Activated CD4-positive, alpha-beta T cell treated with anti-CD3 and anti-CD28 coated beads for 36 hours (primary cell): ENCODE measurements at regions of chr5 and their contacts with region 1.

Region 1: GRCh38 chr5:1799602-1800471 is at the start of gene MRPL36:
- DNase-seq: peak; percentile 97
- ATAC-seq: peak; percentile 79
- H3K4me3 Mint-ChIP-seq: peak within 1 kb of the TSS; percentile 94
- H3K27ac Mint-ChIP-seq: peak within 1 kb of the TSS; percentile 97
- H3K4me1 Mint-ChIP-seq: peaks cover 54% of the 10 kb centered on the region
- H3K27me3 Mint-ChIP-seq: no peaks in the 10 kb centered on the region
- total RNA-seq, gene MRPL36: 51.4 to 64.9 TPM

Region 2: DNA sequence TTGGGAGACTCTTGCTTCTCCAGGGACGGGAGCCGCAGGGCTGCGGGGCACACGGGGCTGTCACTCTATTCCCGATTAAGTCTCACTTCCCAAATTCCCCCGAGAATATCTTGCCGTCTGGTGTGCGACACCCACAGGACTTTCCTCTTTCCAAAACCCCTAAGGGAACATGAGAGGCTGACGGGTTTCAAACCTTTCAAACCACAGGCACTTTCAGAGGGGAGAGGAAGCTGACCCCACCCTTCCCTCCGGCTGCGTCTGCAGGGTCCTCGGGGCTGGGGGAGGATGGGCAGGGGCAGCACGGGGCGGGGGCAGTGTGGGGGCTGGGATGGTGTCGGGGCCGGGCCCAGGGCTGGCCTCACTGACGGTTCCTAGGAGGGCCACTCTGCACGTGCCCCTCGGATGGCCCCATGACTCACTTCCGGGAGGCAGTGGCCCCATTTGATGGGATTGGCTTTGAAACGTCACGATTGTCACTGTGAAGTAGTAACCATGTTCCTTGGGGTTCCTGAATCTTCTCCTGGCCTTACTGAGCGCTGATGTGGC is 1313.8 kb before region 1 on chr5:
- CTCF ChIA-PET with region 1: no interaction called
- POLR2A ChIA-PET with region 1: no interaction called
- intact Hi-C with region 1: no loop called
- DNase-seq: peak; percentile 43
- ATAC-seq: peak; percentile 59
- H3K4me3 Mint-ChIP-seq: no peak overlapping the region
- H3K27ac Mint-ChIP-seq: no peak overlapping the region
- H3K4me1 Mint-ChIP-seq: peaks cover 6% of the 10 kb centered on the region
- H3K27me3 Mint-ChIP-seq: peaks cover 4% of the 10 kb centered on the region

Region 3: DNA sequence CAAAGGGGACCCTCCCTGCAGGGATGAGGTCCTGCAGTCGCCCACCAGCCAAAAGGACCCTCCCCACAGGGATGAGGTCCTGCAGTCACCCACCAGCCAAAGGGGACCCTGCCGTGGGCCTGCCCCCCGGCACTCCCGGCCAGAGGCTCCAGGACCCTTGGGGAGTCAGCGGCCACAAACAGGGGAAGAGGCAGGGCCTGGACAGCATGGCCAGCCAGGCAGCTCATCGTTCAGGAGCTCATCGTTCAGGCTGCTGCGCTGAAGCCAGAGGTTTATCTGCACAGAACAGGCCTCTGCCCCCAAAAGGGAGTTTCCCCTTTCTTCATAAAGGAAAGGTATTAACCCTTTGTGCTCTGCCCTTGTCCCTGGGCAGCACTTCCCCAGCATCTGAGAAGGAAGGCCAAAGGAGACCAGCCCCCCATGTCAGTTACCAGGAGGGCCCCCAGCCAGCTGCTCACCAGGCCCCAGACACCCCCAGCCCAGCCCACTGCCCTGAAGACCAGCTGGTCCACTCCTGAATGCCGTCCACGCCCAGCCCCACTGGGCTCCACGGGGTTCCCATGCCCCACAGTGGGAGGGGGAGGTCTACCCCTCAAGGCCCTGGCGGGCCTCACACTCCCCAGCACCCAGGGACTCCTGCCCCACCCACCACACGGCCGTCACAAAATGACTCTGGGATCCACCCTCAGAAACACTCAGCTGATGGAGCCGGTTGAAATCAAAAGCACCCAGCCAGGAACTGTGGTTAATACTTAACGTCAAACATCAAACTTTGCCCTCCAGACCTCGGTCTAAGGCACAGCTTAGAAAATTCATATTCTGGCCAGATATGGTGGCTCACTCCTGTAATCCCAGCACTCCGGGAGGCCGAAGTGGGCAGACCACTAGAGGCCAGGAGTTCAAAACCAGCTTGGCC is 694.2 kb before region 1 on chr5:
- CTCF ChIA-PET with region 1: no interaction called
- POLR2A ChIA-PET with region 1: no interaction called
- intact Hi-C with region 1: loop called in 1 of 2 experiments (anchors 5 kb)
- DNase-seq: peak; percentile 79
- ATAC-seq: peak; percentile 60
- H3K4me3 Mint-ChIP-seq: peak overlapping the region; percentile 8
- H3K27ac Mint-ChIP-seq: peak overlapping the region; percentile 83
- H3K4me1 Mint-ChIP-seq: peaks cover 76% of the 10 kb centered on the region
- H3K27me3 Mint-ChIP-seq: no peaks in the 10 kb centered on the region

Region 4: DNA sequence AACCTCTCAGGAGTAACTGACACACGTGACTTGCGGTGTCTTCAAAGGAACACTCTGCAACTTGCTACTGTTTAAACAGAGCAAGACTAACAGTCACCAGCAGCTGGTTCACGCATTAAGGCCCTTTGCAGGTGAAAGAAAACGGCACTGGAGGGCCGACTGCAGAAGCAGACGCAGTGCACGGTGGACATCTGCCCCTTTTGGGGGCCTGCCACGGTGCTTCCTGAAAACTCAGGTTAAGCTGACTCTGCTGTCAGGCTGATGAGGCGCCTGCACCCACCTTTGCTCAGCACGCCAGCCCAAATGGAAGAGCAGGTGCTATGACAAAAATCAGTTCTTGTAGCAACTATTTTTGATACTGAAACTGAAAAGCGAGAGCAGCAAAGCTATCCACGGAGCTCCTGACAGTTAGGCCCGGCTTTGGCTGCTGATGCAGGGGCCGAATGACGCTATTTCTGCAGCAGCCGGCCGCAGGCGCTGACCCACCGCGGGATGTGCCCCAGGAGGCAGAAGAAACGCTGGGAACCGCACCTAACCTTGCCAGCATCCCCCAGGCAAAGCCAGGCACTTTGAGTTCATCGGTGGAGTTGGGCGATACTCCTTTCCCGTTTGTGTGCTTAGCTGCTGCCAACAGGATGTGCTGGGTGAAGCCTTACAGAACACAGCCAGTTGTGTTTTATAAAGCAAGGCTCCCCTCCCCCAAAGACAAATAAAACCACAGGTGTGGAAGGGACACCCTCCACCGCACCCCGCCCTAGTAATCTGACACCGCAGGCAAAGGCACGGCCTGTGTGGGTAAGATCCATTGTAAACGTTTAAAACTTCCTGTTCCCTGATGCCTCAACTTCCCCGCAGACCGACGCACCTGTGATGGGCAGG is 483.9 kb before region 1 on chr5:
- CTCF ChIA-PET with region 1: no interaction called
- POLR2A ChIA-PET with region 1: no interaction called
- intact Hi-C with region 1: loop called in 1 of 2 experiments (anchors 10 kb)
- DNase-seq: peak; percentile 74
- ATAC-seq: peak; percentile 68
- H3K4me3 Mint-ChIP-seq: peak overlapping the region; percentile 49
- H3K27ac Mint-ChIP-seq: peak overlapping the region; percentile 89
- H3K4me1 Mint-ChIP-seq: peaks cover 61% of the 10 kb centered on the region
- H3K27me3 Mint-ChIP-seq: no peaks in the 10 kb centered on the region

Region 5: DNA sequence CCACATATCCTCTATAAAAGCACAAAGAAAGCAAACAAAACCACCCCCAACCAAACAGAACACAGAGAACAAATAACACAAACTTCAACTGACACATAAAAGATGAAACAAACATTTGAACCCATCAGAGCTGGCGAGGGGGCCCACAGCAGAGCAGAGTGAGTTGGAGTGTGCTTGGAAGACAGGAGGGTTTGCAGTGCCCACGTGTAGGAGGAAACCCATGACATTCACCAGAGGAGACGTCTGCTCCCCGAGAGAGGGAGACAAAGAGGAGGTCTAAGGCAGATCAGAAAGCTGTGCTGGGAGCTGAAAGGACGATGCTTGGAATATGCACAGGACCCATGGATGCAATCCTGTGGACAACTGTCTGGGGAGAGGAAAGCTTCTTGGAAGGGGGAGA is 27.2 kb before region 1 on chr5:
- CTCF ChIA-PET with region 1: no interaction called
- POLR2A ChIA-PET with region 1: no interaction called
- intact Hi-C with region 1: loop called in 1 of 2 experiments (anchors 1 kb)
- DNase-seq: peak; percentile 6
- ATAC-seq: peak; percentile 60
- H3K4me3 Mint-ChIP-seq: no peak overlapping the region
- H3K27ac Mint-ChIP-seq: no peak overlapping the region
- H3K4me1 Mint-ChIP-seq: no peaks in the 10 kb centered on the region
- H3K27me3 Mint-ChIP-seq: no peaks in the 10 kb centered on the region

Region 6: GRCh38 chr5:1851290-1851934 is 51.6 kb after region 1 on chr5:
- CTCF ChIA-PET with region 1: no interaction called
- POLR2A ChIA-PET with region 1: no interaction called
- intact Hi-C with region 1: no loop called
- DNase-seq: no peak
- ATAC-seq: no peak
- H3K4me3 Mint-ChIP-seq: no peak overlapping the region
- H3K27ac Mint-ChIP-seq: no peak overlapping the region
- H3K4me1 Mint-ChIP-seq: no peaks in the 10 kb centered on the region
- H3K27me3 Mint-ChIP-seq: peaks cover 52% of the 10 kb centered on the region